K562 (cell line): ENCODE measurements at regions of chr4 and their contacts with region 1.

Region 1: DNA sequence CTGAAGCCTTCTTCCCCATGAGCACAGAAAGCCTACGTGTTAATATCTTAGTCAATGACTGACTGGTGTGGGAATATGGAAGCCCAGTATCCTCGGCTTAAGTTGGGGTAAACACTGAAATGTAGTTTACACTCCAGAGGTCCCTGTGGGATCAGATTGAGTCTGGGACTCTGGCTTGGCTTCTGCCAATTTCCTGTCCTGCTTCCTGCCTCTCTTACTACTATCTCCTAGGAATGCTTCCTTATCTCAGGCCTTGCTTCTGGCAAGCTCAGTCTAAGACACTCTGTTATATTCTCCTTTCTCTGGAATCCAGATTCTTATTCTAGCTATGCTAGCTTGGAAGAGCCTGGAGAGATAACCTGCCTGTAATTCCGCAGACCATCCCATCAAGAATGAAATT is 174.0 kb upstream of the LDB2 start:
- DNase-seq: no peak
- ATAC-seq: no peak
- H3K4me3 ChIP-seq: no peak overlapping the region
- H3K27ac ChIP-seq: no peak overlapping the region
- H3K4me1 ChIP-seq: no peaks in the 10 kb centered on the region
- H3K27me3 ChIP-seq: no peaks in the 10 kb centered on the region
- CTCF ChIP-seq: no peak
- EP300 ChIP-seq: no peak
- POLR2A ChIP-seq: no peak
- RAD21 ChIP-seq: no peak

Region 2: DNA sequence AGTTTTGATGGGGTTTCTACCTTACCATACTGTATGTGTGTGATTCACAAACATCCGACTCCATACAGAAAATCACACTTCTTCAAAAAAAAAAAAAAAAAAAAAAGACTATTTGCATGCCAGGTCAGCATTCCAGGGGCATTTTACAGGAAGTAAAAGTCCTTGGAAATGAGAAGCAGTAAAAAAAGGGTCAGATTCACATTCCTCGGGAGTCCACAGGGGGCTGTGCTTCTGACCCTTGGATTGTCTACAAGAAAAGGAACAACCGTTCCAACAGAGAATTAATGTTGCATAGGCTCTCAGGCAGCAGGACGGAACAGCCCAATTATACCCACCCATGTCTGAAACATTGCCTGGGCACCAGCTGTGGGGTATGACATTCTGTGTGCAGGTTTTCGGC is 464.4 kb before region 1 on chr4:
- CTCF ChIA-PET with region 1: no interaction called
- POLR2A ChIA-PET with region 1: no interaction called
- in situ Hi-C with region 1: loop called (anchors 10 kb)
- intact Hi-C with region 1: no loop called
- DNase-seq: no peak
- ATAC-seq: no peak
- H3K4me3 ChIP-seq: no peak overlapping the region
- H3K27ac ChIP-seq: no peak overlapping the region
- H3K4me1 ChIP-seq: no peaks in the 10 kb centered on the region
- H3K27me3 ChIP-seq: no peaks in the 10 kb centered on the region; a peak in 1 of 5 replicates
- CTCF ChIP-seq: no peak
- EP300 ChIP-seq: no peak
- POLR2A ChIP-seq: no peak
- RAD21 ChIP-seq: no peak